ENCODE measurements at regions of chr2 and their contacts with region 1.

Region 1: DNA sequence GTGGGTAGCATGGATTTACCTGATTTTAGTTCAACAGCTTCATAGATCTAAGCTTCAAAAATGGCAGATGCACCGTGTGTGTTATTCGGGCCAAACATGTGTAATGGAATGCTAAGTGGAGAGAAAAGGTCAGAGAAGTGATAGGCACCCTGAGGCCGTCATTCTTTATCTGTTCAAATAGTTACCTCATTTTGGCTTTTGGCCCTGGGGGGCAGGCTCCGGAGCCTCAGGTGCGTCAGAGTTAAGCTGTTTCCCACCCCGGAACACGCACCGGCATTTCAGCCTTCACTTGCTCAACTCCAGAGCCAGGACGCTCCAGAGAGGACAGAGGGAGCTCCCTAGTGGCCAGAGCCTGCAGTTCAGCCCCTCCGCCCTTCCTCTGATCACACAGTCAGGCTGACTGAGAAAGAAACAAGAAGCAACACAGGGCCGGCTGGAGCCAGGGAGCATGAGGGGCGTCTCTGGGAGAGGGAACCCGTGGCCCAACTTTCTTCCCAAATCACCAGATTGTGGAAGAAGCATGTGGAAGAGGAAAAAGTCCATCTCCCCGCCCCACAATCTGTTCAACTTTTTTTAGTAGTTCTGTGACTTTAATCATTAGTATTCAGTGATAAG is 135.2 kb upstream of the EPC2 start:
- DNase-seq: no peak
- H3K4me3 ChIP-seq: no peak overlapping the region
- H3K27me3 ChIP-seq: no peaks in the 10 kb centered on the region
- CTCF ChIP-seq: peak; percentile 92

Region 2: GRCh38 chr2:147934881-147935620 is 574.3 kb before region 1 on chr2:
- CTCF ChIA-PET with region 1: interaction called, 14 read pairs
- POLR2A ChIA-PET with region 1: no interaction called
- DNase-seq: no peak
- H3K4me3 ChIP-seq: no peak overlapping the region
- H3K27me3 ChIP-seq: no peaks in the 10 kb centered on the region
- CTCF ChIP-seq: no peak

Region 3: DNA sequence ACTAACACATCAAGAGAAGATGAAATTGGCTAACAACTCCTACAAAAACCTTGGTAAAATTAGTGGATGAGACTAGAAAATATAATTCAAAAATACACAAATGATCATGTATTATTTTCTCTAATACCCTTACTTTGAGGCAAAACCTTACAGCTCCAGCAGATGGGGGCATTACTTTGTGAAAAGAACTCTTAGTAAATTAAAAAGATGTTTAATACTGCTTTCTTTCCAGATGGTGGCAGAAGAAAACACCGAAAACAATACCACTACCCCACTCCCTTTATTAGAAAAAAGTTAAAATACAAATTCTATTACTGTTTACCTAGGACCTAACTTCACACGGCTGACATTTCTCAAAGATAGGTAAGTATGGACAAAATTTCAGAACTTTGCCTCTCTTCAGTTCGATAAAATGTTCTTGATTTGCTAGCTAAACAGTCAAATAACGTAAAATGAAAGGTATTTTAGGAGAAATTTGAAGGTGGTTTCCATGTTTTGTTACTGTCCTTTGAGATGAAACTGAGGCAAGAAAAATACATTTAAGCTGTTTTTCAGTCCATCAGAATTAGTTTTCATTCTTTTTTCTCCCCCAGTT is 519.5 kb before region 1 on chr2:
- CTCF ChIA-PET with region 1: interaction called, 60 read pairs
- POLR2A ChIA-PET with region 1: no interaction called
- DNase-seq: no peak
- H3K4me3 ChIP-seq: no peak overlapping the region
- H3K27me3 ChIP-seq: no peaks in the 10 kb centered on the region
- CTCF ChIP-seq: peak; percentile 65

Region 4: DNA sequence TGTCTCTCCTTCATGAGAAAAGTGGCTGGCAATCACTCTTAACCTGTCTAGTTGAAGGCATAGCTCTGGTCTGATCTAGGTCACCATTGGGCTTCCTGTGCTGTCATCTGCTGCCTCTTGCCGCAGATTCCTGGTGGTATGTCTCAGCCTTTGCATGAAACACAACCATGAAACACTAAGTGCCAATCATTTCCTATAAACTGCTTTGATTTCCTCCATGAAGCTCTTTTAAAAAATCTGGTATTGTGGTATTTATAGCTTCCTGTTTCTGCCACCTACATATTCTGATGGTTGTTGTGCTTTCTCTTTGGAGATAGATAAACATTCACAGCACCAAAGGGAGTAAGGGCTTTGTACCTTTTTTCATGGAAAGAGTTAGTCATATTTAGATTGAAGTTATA is 15.1 kb after region 1 on chr2:
- CTCF ChIA-PET with region 1: interaction called, 27 read pairs
- POLR2A ChIA-PET with region 1: no interaction called
- DNase-seq: no peak
- H3K4me3 ChIP-seq: no peak overlapping the region
- H3K27me3 ChIP-seq: no peaks in the 10 kb centered on the region
- CTCF ChIP-seq: no peak